Activated CD8-positive, alpha-beta T cell treated with anti-CD3 and anti-CD28 coated beads, Interleukin-2, amount 10 ng/mL, durations not matched to agents 7 days and 5 days (primary cell): ENCODE measurements at regions of chr17 and their contacts with region 1.

Region 1: DNA sequence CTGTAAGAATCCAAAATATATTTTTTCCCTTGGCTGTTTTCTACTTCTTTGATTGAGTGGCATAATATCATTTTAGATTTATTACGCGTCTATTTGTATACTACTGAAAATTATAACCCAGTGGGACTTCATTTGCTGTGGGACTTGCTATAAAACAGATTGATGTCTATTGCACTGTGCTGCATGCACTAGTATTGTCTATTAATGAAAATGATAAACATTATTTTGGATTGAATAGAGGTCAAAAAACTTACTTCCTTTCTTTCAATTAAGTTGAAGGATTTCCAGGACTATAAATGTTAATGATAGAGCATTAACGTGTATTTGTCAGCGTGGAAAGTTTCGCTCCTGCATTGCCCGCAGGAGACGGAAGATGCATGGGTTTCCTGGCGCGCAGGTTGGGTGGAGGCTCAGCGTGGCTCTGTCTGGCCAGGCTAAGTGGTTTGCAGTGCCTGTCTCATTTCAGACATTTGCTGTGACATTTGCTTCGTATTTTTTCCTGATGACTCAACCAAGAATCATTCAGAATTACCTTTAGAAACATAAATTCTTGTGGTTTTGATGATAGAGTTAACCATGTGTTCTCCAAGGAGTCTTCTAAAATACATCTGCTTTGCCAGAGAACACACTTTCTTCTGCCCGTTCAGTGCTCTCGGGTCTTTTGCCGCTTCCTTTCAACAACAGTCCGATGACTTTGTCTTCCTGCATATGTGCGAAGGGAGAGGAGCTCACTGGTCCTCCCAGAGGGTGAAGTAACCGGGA is 216.7 kb downstream of the RPTOR start:
- DNase-seq: peak; percentile 76
- ATAC-seq: peak; percentile 79
- H3K4me3 Mint-ChIP-seq: peak overlapping the region; percentile 74
- H3K27ac Mint-ChIP-seq: peak overlapping the region; percentile 99
- H3K4me1 Mint-ChIP-seq: peaks cover 88% of the 10 kb centered on the region
- H3K27me3 Mint-ChIP-seq: no peaks in the 10 kb centered on the region

Region 2: GRCh38 chr17:80773243-80773991 is 12.1 kb after region 1 on chr17:
- CTCF ChIA-PET with region 1: interaction called, 19 read pairs
- POLR2A ChIA-PET with region 1: interaction called, 11 read pairs
- DNase-seq: no peak
- ATAC-seq: peak; percentile 53
- H3K4me3 Mint-ChIP-seq: no peak overlapping the region
- H3K27ac Mint-ChIP-seq: peak overlapping the region; percentile 94
- H3K4me1 Mint-ChIP-seq: peaks cover 75% of the 10 kb centered on the region
- H3K27me3 Mint-ChIP-seq: no peaks in the 10 kb centered on the region

Region 3: DNA sequence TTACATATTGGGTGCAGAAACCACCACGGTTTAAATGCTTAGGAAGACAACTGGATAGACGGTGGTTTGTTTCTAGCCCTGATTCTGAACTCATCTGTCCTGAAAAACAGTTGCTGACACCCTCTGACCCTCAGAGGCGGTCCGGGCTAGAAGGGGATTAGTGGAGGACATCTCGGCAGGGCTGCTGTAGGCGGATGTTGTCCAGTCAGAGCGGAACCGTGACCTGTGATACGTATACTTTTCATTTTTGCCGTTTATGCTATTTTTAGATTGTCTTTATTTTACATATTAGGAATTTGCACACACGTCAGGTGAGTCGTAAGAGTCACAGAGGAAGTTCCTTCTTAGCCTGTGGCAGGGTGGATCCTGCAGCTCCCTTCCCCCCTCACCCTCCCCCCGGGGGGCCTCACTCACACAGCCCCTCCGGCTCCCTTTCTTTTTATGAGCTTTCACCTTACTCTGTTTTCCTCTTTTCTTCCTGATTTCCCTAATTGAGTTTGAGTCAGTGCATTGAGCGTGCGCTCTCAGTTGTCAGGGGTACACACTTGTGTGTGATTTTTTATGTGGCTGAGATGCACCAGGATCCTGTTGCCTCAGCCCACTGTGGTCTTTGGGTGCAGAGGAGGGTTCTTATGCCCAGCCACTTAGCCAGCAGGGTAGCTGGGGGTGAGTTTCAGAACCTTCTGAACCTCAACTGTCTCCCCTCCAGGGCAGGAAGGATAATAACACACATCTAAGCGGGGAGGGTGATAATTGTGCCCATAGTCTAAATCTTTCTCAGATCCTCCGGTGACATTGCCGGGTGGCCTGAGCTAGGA is 19.3 kb after region 1 on chr17:
- CTCF ChIA-PET with region 1: interaction called, 19 read pairs
- POLR2A ChIA-PET with region 1: interaction called, 11 read pairs
- DNase-seq: peak; percentile 76
- ATAC-seq: peak; percentile 73
- H3K4me3 Mint-ChIP-seq: peak overlapping the region; percentile 52
- H3K27ac Mint-ChIP-seq: peak overlapping the region; percentile 90
- H3K4me1 Mint-ChIP-seq: peaks cover 85% of the 10 kb centered on the region
- H3K27me3 Mint-ChIP-seq: no peaks in the 10 kb centered on the region